CD8-positive, alpha-beta memory T cell (primary cell): ENCODE measurements at regions of chr14 and their contacts with region 1.

Region 1: GRCh38 chr14:81170104-81170828 is 50.5 kb downstream of the GTF2A1 start:
- DNase-seq: peak; percentile 83 to 91 (median 88)
- H3K4me3 ChIP-seq: peak overlapping the region; percentile 84
- H3K4me3 Mint-ChIP-seq: peak overlapping the region; percentile 87 to 96 (median 94)
- H3K27ac ChIP-seq: peak overlapping the region; percentile 82
- H3K27ac Mint-ChIP-seq: peak overlapping the region; percentile 90 to 98 (median 96)
- H3K4me1 ChIP-seq: peaks cover 18% of the 10 kb centered on the region
- H3K4me1 Mint-ChIP-seq: peaks cover 27 to 30% (median 29%) of the 10 kb centered on the region in 3 donors
- H3K27me3 ChIP-seq: no peaks in the 10 kb centered on the region
- H3K27me3 Mint-ChIP-seq: no peaks in the 10 kb centered on the region

Region 2: DNA sequence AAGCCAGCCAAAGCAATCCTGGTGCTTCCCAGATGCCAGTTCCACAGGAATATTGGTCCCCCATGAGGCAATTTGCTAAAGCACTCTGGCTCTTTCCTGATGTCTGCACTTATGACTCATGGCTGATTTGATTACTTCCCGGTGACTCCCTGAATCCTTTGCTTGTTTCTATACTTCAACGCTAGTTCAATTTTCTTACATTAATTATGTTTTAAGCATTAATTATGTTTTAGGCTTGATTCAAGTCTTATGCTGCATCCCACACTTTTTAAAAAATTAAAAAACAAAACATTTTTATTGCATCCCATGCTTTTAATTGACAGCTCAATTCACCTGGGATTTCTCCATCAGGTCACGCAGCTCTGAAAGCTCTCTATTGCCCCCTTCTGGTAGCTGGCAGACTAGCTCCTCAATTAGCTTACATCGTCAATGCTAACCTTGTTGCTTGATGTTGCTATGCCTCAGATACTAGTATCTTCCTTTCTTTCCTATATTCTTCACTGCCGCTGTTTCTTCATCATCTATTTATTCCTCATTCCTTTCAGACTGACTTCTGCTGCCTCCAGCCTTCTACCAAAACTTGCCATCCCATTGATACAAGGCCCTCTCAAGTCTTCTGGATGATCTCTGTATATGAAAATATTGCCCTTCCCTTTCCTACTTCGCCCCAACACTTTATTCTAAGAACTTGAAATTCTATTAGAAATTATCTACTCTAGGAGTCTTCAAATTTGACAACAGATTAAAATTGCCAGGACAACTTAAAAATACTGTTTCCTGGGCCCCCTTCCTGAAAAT is 182.8 kb before region 1 on chr14:
- CTCF ChIA-PET with region 1: interaction called, 19 read pairs
- POLR2A ChIA-PET with region 1: interaction called, 3 read pairs
- DNase-seq: peak; percentile 43 to 75 (median 51)
- H3K4me3 ChIP-seq: no peak overlapping the region
- H3K4me3 Mint-ChIP-seq: no peak overlapping the region
- H3K27ac ChIP-seq: no peak overlapping the region
- H3K27ac Mint-ChIP-seq: no peak overlapping the region
- H3K4me1 ChIP-seq: no peaks in the 10 kb centered on the region
- H3K4me1 Mint-ChIP-seq: no peaks in the 10 kb centered on the region
- H3K27me3 ChIP-seq: peaks cover 4% of the 10 kb centered on the region
- H3K27me3 Mint-ChIP-seq: peaks cover 3 to 7% of the 10 kb centered on the region in 2 donors

Region 3: DNA sequence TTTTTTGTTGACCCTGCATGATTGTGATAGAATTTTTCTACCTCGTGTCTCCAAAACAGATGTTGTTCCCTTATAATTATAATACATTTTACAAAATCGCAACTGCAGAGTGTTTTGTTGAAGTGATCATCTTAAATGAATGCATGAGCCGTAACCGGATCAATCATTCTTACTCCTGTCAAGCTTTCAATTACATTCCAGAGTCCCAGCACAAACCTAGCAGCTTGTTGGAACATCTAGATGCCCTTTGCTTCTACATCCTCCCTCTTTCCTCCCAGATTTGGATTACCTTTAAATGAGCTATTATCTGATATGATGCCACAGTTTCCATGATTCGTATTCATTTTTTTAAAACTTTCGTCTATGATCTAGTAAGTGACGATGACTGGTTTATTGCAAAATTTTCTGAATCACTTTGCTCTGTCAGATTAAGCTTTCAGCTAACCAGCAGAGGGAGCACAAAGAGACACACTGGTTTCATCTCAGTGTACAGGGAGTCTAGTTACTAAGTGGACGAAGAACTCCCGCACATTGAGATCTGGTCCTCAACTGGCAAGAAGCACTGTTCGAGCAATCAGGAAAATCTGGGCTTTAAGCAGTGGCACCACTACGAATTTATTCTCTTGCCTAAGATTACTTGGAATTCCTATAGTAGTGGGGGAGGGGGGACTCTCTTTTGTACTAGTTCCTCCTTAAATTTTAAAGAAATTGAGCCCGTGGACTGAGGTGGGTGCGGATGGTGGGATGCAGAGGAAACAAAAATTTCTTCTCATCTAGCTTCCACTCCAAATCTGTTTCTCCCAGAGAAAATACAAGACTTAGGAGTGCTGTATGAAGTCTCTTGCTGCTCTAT is 174.0 kb before region 1 on chr14:
- CTCF ChIA-PET with region 1: interaction called, 37 read pairs
- POLR2A ChIA-PET with region 1: interaction called, 4 read pairs
- DNase-seq: peak in 3 of 5 donors; percentile 7 to 21 (median 17)
- H3K4me3 ChIP-seq: no peak overlapping the region
- H3K4me3 Mint-ChIP-seq: no peak overlapping the region
- H3K27ac ChIP-seq: no peak overlapping the region
- H3K27ac Mint-ChIP-seq: no peak overlapping the region
- H3K4me1 ChIP-seq: no peaks in the 10 kb centered on the region
- H3K4me1 Mint-ChIP-seq: peaks cover 0 to 6% (median 5%) of the 10 kb centered on the region in 3 donors
- H3K27me3 ChIP-seq: no peaks in the 10 kb centered on the region
- H3K27me3 Mint-ChIP-seq: peaks cover 3 to 42% of the 10 kb centered on the region in 2 donors

Region 4: DNA sequence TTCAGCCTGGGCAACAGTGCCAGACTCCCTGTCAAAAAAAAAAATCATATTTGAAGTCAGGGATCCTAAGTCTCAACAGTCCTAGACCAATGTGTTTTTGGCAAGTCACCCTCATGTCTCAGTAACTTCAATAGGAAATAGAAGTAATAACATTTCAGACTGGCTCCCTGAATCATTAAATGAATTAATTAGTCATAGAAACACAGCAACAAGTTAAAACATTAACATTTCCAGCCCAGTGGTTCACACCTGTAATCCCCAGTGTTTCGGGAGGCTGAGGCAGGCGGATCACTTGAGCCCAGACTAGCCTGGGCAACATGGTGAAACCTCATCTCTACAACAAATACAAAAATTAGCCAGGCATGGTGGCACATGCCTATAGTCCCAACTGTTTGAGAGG is 74.7 kb before region 1 on chr14:
- CTCF ChIA-PET with region 1: no interaction called
- POLR2A ChIA-PET with region 1: no interaction called
- DNase-seq: no peak
- H3K4me3 ChIP-seq: no peak overlapping the region
- H3K4me3 Mint-ChIP-seq: no peak overlapping the region
- H3K27ac ChIP-seq: no peak overlapping the region
- H3K27ac Mint-ChIP-seq: no peak overlapping the region
- H3K4me1 ChIP-seq: no peaks in the 10 kb centered on the region
- H3K4me1 Mint-ChIP-seq: no peaks in the 10 kb centered on the region
- H3K27me3 ChIP-seq: no peaks in the 10 kb centered on the region
- H3K27me3 Mint-ChIP-seq: no peaks in the 10 kb centered on the region

Region 5: DNA sequence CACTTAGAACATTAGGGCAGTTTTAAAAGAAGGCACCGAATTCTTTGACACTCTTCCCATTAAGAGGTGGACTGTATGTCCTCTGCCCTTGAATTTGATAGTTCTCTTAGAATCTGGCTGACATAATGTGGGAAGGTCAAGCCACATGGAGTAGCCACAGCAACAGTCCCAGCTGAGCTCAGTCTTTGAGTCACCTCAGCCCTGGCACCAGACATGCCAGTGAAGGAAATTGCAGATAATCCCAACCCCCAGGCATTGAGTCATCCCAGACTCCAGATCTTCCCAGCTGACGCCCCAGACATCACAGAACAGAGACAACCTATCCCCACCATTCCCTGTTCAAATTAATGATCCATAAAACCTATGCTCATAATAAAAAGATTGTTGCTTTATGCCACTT is 33.0 kb before region 1 on chr14:
- CTCF ChIA-PET with region 1: no interaction called
- POLR2A ChIA-PET with region 1: no interaction called
- DNase-seq: no peak
- H3K4me3 ChIP-seq: no peak overlapping the region
- H3K4me3 Mint-ChIP-seq: no peak overlapping the region
- H3K27ac ChIP-seq: no peak overlapping the region
- H3K27ac Mint-ChIP-seq: no peak overlapping the region
- H3K4me1 ChIP-seq: no peaks in the 10 kb centered on the region
- H3K4me1 Mint-ChIP-seq: no peaks in the 10 kb centered on the region
- H3K27me3 ChIP-seq: no peaks in the 10 kb centered on the region
- H3K27me3 Mint-ChIP-seq: peaks cover 0 to 1% of the 10 kb centered on the region in 2 donors

Region 6: GRCh38 chr14:81187832-81188522 is 17.7 kb after region 1 on chr14:
- CTCF ChIA-PET with region 1: interaction called, 12 read pairs
- POLR2A ChIA-PET with region 1: no interaction called
- DNase-seq: no peak
- H3K4me3 ChIP-seq: no peak overlapping the region
- H3K4me3 Mint-ChIP-seq: no peak overlapping the region
- H3K27ac ChIP-seq: no peak overlapping the region
- H3K27ac Mint-ChIP-seq: peak overlapping the region in 4 of 8 donors; percentile 7 to 54 (median 34)
- H3K4me1 ChIP-seq: peaks cover 14% of the 10 kb centered on the region
- H3K4me1 Mint-ChIP-seq: peaks cover 43 to 69% (median 63%) of the 10 kb centered on the region in 3 donors
- H3K27me3 ChIP-seq: no peaks in the 10 kb centered on the region
- H3K27me3 Mint-ChIP-seq: no peaks in the 10 kb centered on the region